ENCODE measurements at regions of chr2 and their contacts with region 1.

Region 1: GRCh38 chr2:240143801-240144648 is 3.6 kb upstream of the OTOS start:
- DNase-seq: peak; percentile 70
- ATAC-seq: peak; percentile 91
- H3K4me3 ChIP-seq: no peak overlapping the region
- H3K27ac ChIP-seq: no peak overlapping the region
- H3K4me1 ChIP-seq: no peaks in the 10 kb centered on the region; the same call in 1 of the 2 replicates
- H3K27me3 ChIP-seq: no peaks in the 10 kb centered on the region
- CTCF ChIP-seq: peak; percentile 87

Region 2: DNA sequence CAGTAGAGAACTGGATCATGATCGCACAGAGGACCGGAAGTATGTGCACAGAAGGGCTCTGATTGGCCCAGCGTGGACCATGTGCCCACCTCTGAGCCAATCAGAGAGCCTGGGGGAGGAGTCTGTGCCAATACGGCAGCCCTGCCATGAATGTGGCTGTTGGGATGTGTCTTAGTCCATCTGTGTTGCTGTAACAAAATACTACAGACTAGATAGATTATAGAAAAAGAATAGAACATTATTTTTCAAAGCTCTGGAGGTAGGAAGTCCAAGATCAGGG is 250.8 kb before region 1 on chr2:
- CTCF ChIA-PET with region 1: no interaction called
- POLR2A ChIA-PET with region 1: no interaction called
- intact Hi-C with region 1: no loop called
- DNase-seq: no peak
- ATAC-seq: no peak
- H3K4me3 ChIP-seq: no peak overlapping the region
- H3K27ac ChIP-seq: no peak overlapping the region
- H3K4me1 ChIP-seq: no peaks in the 10 kb centered on the region
- H3K27me3 ChIP-seq: peaks cover 19% of the 10 kb centered on the region; the same call in 1 of the 2 replicates
- CTCF ChIP-seq: no peak

Region 3: GRCh38 chr2:239991689-239992314 is 152.2 kb before region 1 on chr2:
- CTCF ChIA-PET with region 1: no interaction called
- POLR2A ChIA-PET with region 1: no interaction called
- intact Hi-C with region 1: no loop called
- DNase-seq: peak; percentile 65
- ATAC-seq: peak; percentile 49
- H3K4me3 ChIP-seq: no peak overlapping the region
- H3K27ac ChIP-seq: no peak overlapping the region
- H3K4me1 ChIP-seq: no peaks in the 10 kb centered on the region
- H3K27me3 ChIP-seq: no peaks in the 10 kb centered on the region
- CTCF ChIP-seq: peak; percentile 88

Region 4: GRCh38 chr2:240060977-240061591 is 82.9 kb before region 1 on chr2:
- CTCF ChIA-PET with region 1: interaction called, 15 read pairs
- POLR2A ChIA-PET with region 1: no interaction called
- intact Hi-C with region 1: loop called (anchors 1 kb)
- DNase-seq: peak; percentile 79
- ATAC-seq: peak; percentile 90
- H3K4me3 ChIP-seq: no peak overlapping the region
- H3K27ac ChIP-seq: no peak overlapping the region
- H3K4me1 ChIP-seq: no peaks in the 10 kb centered on the region
- H3K27me3 ChIP-seq: peaks cover 50% of the 10 kb centered on the region
- CTCF ChIP-seq: peak; percentile 74

Measured in PC-3 (cell line).